K562 (cell line): ENCODE measurements at regions of chr7 and their contacts with region 1.

Region 1: GRCh38 chr7:47818796-47819606 is 129.3 kb downstream of the PKD1L1 start:
- DNase-seq: peak; percentile 45 to 61 (median 54)
- ATAC-seq: peak; percentile 84
- H3K4me3 ChIP-seq: no peak overlapping the region
- H3K27ac ChIP-seq: no peak overlapping the region
- H3K4me1 ChIP-seq: no peaks in the 10 kb centered on the region
- H3K27me3 ChIP-seq: peaks cover 0 to 20% of the 10 kb centered on the region in 2 experiments; a peak in 2 of 5 replicates
- CTCF ChIP-seq: peak; percentile 75 to 92 (median 87)
- EP300 ChIP-seq: no peak
- POLR2A ChIP-seq: no peak
- RAD21 ChIP-seq: peak; percentile 84 to 87

Region 2: GRCh38 chr7:47351233-47352154 is 467.5 kb before region 1 on chr7:
- CTCF ChIA-PET with region 1: no interaction called
- POLR2A ChIA-PET with region 1: no interaction called
- in situ Hi-C with region 1: no loop called
- intact Hi-C with region 1: loop called (anchors 1 kb)
- DNase-seq: no peak
- ATAC-seq: peak; percentile 33; the same call in 2 of the 3 replicates
- H3K4me3 ChIP-seq: no peak overlapping the region
- H3K27ac ChIP-seq: no peak overlapping the region
- H3K4me1 ChIP-seq: peaks cover 10 to 14% of the 10 kb centered on the region in 2 experiments; a peak in 4 of 5 replicates
- H3K27me3 ChIP-seq: peaks cover 0 to 52% of the 10 kb centered on the region in 2 experiments; a peak in 2 of 5 replicates
- CTCF ChIP-seq: peak; percentile 8 to 26 (median 17); a peak in 1 of 6 replicates
- EP300 ChIP-seq: no peak
- POLR2A ChIP-seq: no peak
- RAD21 ChIP-seq: peak in 1 of 2 experiments; percentile 36; a peak in 2 of 4 replicates

Region 3: GRCh38 chr7:47435889-47436312 is 383.1 kb before region 1 on chr7:
- CTCF ChIA-PET with region 1: no interaction called
- POLR2A ChIA-PET with region 1: no interaction called
- in situ Hi-C with region 1: no loop called
- intact Hi-C with region 1: loop called (anchors 10 kb)
- DNase-seq: peak; percentile 31 to 66 (median 41)
- ATAC-seq: peak; percentile 97
- H3K4me3 ChIP-seq: no peak overlapping the region
- H3K27ac ChIP-seq: no peak overlapping the region
- H3K4me1 ChIP-seq: no peaks in the 10 kb centered on the region
- H3K27me3 ChIP-seq: peaks cover 3 to 11% of the 10 kb centered on the region in 2 experiments; a peak in 2 of 5 replicates
- CTCF ChIP-seq: peak; percentile 51 to 70 (median 67)
- EP300 ChIP-seq: peak; percentile 88
- POLR2A ChIP-seq: no peak
- RAD21 ChIP-seq: peak; percentile 71 to 73

Region 4: DNA sequence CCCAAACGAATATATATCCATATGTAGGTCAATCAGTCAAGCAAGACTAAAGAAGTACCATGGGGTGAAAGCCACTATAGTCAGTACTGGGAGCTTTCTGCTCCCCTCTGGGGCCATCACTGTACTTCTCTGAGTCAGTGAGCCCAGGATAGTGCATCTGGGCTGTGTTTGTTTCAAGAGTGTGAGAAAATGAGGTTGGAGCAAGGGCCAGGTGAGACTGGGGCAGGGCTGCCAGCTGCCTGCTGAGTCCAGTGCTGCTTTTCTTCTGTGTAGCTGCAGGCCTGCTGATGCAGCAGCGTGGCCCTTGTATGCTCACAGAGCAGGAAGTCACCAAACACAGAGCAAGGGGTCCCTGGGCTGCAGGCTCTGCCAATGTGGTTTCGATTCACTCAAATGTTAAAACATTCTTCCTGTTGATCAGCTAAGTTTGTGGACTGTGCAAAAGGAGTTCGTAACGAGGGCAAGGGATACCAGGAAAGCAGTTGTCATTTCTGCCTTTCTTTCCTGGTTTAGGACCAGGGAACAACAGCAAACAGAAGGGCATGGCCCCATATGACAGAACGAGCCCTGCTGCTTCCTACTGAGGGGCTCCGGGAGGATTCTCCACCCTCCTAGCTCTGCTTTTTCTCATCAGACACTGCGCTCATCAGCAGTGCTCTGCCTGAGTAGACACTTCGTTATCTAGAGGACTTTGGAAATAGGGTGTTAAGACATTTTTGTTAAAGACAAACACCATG is 171.7 kb before region 1 on chr7:
- CTCF ChIA-PET with region 1: no interaction called
- POLR2A ChIA-PET with region 1: no interaction called
- in situ Hi-C with region 1: no loop called
- intact Hi-C with region 1: no loop called
- DNase-seq: no peak
- ATAC-seq: no peak
- H3K4me3 ChIP-seq: no peak overlapping the region
- H3K27ac ChIP-seq: no peak overlapping the region
- H3K4me1 ChIP-seq: no peaks in the 10 kb centered on the region
- H3K27me3 ChIP-seq: peaks cover 0 to 33% of the 10 kb centered on the region in 2 experiments; a peak in 2 of 5 replicates
- CTCF ChIP-seq: no peak
- EP300 ChIP-seq: no peak
- POLR2A ChIP-seq: no peak
- RAD21 ChIP-seq: no peak

Region 5: DNA sequence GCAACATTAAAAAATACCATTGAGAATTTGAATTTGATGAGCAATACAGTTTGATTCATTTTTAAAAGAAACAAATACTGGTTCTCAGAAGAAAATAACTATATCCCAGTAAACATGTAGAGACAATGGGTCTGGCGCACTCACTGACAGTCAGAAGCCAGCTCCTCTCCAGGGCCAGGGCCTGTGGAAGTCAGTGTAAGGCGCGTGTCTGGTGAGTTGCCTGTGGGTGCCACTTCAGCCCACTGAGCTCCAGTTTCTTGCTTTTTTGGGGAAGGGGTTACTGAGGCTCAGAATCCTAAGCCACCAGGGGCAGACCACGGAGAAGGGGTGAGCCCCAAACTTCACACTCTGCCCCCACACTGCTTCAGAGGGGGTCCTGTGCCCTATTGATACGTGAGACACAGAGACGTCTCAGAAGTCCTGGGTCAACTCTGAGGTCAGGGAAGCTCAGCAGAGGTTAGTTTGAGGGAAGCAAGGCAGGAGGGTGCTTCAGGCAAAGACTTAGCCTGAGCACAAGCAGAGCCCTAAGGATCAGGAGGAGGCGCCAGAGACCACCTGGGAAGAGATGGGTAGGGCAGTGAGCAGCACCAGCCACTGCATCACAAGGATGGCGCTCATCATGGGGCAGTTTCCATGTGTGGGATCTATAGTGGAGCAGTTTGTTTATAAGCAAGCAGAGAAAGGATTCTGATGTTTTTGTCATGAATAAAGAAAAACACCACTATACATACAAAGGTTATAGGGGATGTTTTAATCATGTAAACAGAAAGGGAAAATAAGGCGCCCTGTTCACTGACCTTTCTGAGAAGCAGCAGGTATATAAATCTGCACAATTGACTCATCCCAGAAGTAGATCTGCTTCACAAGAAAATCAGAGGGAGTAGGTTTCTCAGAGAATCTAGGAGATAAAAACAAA is 33.6 kb after region 1 on chr7:
- CTCF ChIA-PET with region 1: no interaction called
- POLR2A ChIA-PET with region 1: no interaction called
- in situ Hi-C with region 1: no loop called
- intact Hi-C with region 1: no loop called
- DNase-seq: no peak
- ATAC-seq: peak; percentile 57; the same call in 2 of the 3 replicates
- H3K4me3 ChIP-seq: no peak overlapping the region
- H3K27ac ChIP-seq: no peak overlapping the region
- H3K4me1 ChIP-seq: no peaks in the 10 kb centered on the region
- H3K27me3 ChIP-seq: peaks cover 0 to 9% of the 10 kb centered on the region in 2 experiments; a peak in 2 of 5 replicates
- CTCF ChIP-seq: 0 out of 6 replicates have a peak, but pooled peaks have one; percentile 13 to 21 (median 15)
- EP300 ChIP-seq: no peak
- POLR2A ChIP-seq: no peak
- RAD21 ChIP-seq: no peak